ENCODE measurements at regions of chr18 and their contacts with region 1.

Region 1: DNA sequence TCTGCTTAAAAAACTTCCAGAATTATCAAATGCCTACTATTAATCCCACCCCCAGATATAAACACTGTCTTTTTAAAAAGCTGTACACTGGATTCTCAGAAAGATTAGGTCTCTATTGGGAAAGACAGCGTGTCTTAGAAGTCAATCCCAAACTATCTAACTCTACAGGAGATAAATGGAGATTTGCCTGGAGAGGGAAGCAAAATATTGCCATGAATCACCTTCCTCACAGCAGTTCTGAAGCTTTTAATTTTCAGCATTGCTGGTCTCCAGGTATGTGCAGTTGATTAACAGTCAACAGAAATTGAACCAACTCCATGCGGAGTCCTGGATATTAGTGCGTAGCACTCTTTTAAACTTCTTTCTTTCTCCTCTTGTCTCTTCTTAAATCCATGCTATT is 122.2 kb downstream of the DSC3 start:
- DNase-seq: no peak
- ATAC-seq: no peak
- H3K4me3 ChIP-seq: no peak overlapping the region
- H3K4me3 Mint-ChIP-seq: no peak overlapping the region
- H3K27ac ChIP-seq: no peak overlapping the region
- H3K27ac Mint-ChIP-seq: no peak overlapping the region
- H3K4me1 ChIP-seq: no peaks in the 10 kb centered on the region
- H3K4me1 Mint-ChIP-seq: no peaks in the 10 kb centered on the region
- H3K27me3 ChIP-seq: no peaks in the 10 kb centered on the region
- H3K27me3 Mint-ChIP-seq: no peaks in the 10 kb centered on the region
- CTCF ChIP-seq: no peak

Region 2: GRCh38 chr18:29361853-29362252 is 1558.5 kb before region 1 on chr18:
- CTCF ChIA-PET with region 1: no interaction called
- POLR2A ChIA-PET with region 1: no interaction called
- intact Hi-C with region 1: loop called in 1 of 2 experiments (anchors 5 kb)
- DNase-seq: no peak
- ATAC-seq: no peak
- H3K4me3 ChIP-seq: no peak overlapping the region
- H3K4me3 Mint-ChIP-seq: no peak overlapping the region
- H3K27ac ChIP-seq: no peak overlapping the region
- H3K27ac Mint-ChIP-seq: no peak overlapping the region
- H3K4me1 ChIP-seq: no peaks in the 10 kb centered on the region
- H3K4me1 Mint-ChIP-seq: no peaks in the 10 kb centered on the region
- H3K27me3 ChIP-seq: no peaks in the 10 kb centered on the region
- H3K27me3 Mint-ChIP-seq: no peaks in the 10 kb centered on the region
- CTCF ChIP-seq: no peak

Region 3: GRCh38 chr18:30121397-30121796 is 799.0 kb before region 1 on chr18:
- CTCF ChIA-PET with region 1: no interaction called
- POLR2A ChIA-PET with region 1: no interaction called
- intact Hi-C with region 1: no loop called
- DNase-seq: no peak
- ATAC-seq: no peak
- H3K4me3 ChIP-seq: no peak overlapping the region
- H3K4me3 Mint-ChIP-seq: no peak overlapping the region
- H3K27ac ChIP-seq: no peak overlapping the region
- H3K27ac Mint-ChIP-seq: no peak overlapping the region
- H3K4me1 ChIP-seq: no peaks in the 10 kb centered on the region
- H3K4me1 Mint-ChIP-seq: no peaks in the 10 kb centered on the region
- H3K27me3 ChIP-seq: no peaks in the 10 kb centered on the region
- H3K27me3 Mint-ChIP-seq: no peaks in the 10 kb centered on the region
- CTCF ChIP-seq: no peak